Dorsolateral prefrontal cortex (tissue), 120 donors: ENCODE measurements at regions of chr17 and their contacts with region 1.

Region 1: GRCh38 chr17:20155258-20156195 is 146.4 kb downstream of the SPECC1 start:
- DNase-seq: peak; percentile 77 to 98 (median 96)
- H3K4me3 ChIP-seq: peak overlapping the region; percentile 63 to 92 (median 81)
- H3K27ac ChIP-seq: peak overlapping the region in 57 of 59 donors; percentile 6 to 91 (median 81)
- H3K27me3 ChIP-seq: no peaks in the 10 kb centered on the region
- CTCF ChIP-seq: peak in 22 of 56 donors; percentile 7 to 51 (median 36)

Region 2: GRCh38 chr17:20128036-20128667 is 27.4 kb before region 1 on chr17:
- intact Hi-C with region 1: loop called in 1 of 2 experiments (anchors 2 kb)
- DNase-seq: no peak
- H3K4me3 ChIP-seq: no peak overlapping the region
- H3K27ac ChIP-seq: peak overlapping the region in 46 of 59 donors; percentile 4 to 85 (median 54)
- H3K27me3 ChIP-seq: no peaks in the 10 kb centered on the region
- CTCF ChIP-seq: no peak

Region 3: GRCh38 chr17:20189302-20189701 is 33.8 kb after region 1 on chr17:
- intact Hi-C with region 1: loop called (anchors 2 kb)
- DNase-seq: peak; percentile 23 to 94 (median 91)
- H3K4me3 ChIP-seq: peak overlapping the region in 28 of 59 donors; percentile 0 to 45 (median 20)
- H3K27ac ChIP-seq: peak overlapping the region; percentile 84 to 99 (median 95)
- H3K27me3 ChIP-seq: no peaks in the 10 kb centered on the region
- CTCF ChIP-seq: peak in 9 of 56 donors; percentile 4 to 30 (median 12)

Region 4: DNA sequence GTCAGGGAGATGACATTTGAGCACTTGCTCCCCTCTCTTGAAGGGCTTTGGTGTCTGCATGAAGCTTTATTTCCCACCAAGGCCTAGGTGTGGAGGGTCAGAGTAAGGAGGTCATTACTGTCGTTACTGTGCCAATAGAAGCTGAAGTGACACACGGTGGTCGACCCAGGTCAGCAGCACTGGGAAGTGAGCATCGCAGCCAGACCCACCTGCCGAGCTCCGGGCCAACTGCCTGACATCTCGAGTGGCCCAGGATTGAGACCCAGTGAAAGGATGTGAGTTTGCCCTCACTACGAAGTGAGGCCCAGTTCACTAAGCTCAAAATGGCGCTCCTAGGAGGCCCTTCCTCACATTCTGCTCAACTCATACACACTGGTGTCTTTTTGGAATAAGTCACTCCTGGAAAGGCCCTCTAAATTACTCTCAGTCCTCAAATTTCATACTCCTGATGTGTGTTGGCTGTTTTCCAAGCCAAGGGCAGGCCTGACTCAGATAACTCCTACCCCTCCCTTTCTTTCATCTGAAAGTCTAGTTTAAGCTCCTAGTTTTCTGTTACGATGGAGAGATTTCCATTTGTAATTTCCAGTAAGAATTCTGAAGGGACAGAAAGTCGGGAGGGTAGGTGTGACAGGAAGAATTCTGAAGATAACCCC is 111.4 kb after region 1 on chr17:
- intact Hi-C with region 1: no loop called
- DNase-seq: no peak
- H3K4me3 ChIP-seq: no peak overlapping the region
- H3K27ac ChIP-seq: peak overlapping the region in 44 of 59 donors; percentile 4 to 83 (median 60)
- H3K27me3 ChIP-seq: no peaks in the 10 kb centered on the region
- CTCF ChIP-seq: no peak

Region 5: GRCh38 chr17:20300436-20300934 is 145.0 kb after region 1 on chr17:
- intact Hi-C with region 1: no loop called
- DNase-seq: peak in 5 of 10 donors; percentile 41 to 68 (median 50)
- H3K4me3 ChIP-seq: no peak overlapping the region
- H3K27ac ChIP-seq: peak overlapping the region; percentile 15 to 89 (median 78)
- H3K27me3 ChIP-seq: no peaks in the 10 kb centered on the region
- CTCF ChIP-seq: no peak